ENCODE measurements at regions of chr6 and their contacts with region 1.

Region 1: DNA sequence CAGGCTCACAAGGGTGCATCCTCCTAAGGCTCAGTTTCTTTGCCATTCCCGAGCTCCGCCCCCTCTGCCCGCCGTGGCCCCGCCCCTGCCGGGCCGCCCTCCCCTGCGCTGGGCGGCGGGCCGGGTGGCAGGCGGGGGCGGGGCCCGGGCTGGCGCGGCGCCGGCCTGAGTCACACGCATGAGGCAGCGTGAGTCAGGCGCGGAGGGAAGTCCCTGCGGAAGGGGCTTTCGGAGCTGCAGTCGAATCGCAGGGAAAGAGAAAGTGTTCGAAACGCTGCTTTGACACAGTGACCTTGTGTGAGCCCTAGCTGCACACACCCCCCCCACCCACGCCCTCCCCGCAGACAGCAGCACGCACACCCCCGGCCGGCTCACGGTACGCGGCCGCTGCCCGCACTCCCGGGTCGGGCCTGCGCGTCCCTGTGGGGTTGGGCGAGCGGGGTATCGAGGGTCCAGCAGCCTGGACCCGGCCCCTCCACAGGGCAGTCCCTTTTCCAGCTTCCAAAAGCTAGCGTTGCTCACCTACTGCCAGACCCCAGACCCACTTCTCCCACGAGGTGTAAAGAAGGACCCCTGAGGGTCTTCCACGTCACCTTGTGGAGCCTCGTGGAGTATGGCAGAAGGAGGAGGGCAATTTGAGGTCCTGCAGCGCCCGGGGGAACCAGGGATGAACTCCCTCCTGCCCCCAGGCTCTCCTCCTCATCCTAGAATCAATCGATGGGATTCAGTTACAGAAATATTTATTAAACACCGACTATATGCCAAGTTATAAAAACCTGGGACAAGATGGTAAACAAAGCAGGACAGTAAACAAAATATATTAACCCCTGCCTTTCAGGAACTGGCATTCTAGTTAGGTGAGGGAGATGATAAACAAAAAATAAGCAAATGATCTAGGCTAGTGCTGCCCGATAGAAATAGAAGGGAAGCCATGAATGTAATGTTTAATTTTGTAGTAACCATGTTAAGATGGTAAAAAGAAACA is 12.4 kb upstream of the HMGA1 start:
- DNase-seq: peak; percentile 79 to 96
- H3K4me3 ChIP-seq: peak overlapping the region; percentile 73 to 77
- H3K27ac ChIP-seq: peak overlapping the region; percentile 91 to 92
- H3K4me1 ChIP-seq: peaks cover 0 to 10% of the 10 kb centered on the region in 2 donors
- H3K27me3 ChIP-seq: no peaks in the 10 kb centered on the region
- CTCF ChIP-seq: no peak

Region 2: DNA sequence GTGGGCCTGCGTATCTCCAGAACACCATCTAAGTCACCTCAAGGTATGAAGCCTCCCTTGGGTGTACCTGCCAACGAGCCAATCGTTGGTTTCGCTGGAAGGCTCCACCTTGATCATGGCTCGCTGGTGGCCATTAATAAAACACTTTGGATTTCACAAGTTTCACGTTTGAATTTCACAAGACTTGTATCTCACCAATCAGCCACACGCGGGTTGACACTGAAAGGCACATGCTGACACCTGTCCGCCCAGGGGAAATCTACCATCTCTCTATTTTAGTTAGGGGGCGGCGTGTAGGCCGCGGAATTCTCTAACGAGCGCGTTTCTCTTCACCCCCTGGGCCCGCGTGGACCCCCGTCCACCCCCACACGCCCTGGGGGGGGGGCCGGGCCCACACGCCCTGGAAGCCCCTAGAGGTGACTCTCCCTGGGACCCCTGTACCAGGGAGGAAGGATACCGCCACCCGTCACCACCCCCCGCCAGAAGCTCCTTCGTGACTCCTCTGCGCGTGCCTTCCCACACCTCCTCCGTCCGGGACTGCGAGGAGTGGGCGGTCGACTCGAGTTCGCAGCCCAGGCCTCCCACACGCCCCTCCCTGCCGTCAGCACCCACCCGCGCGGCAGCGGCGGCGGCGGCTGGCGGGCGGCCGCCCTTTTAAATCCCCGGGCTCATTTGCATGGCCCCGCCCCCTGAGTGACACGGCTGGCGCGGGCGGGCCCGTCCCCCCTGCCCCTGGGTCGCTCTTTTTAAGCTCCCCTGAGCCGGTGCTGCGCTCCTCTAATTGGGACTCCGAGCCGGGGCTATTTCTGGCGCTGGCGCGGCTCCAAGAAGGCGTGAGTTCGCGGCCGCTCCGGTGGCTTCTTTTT is 12.1 kb after region 1 on chr6 and contains the start of gene HMGA1:
- intact Hi-C with region 1: loop called (anchors 1 kb)
- DNase-seq: peak; percentile 72 to 92
- H3K4me3 ChIP-seq: peak within 1 kb of the TSS; percentile 67 to 71
- H3K27ac ChIP-seq: peak within 1 kb of the TSS; percentile 80 to 90
- H3K4me1 ChIP-seq: peaks cover 10 to 12% of the 10 kb centered on the region in 2 donors
- H3K27me3 ChIP-seq: no peaks in the 10 kb centered on the region
- CTCF ChIP-seq: no peak
- total RNA-seq, gene HMGA1: 21.4 TPM

Measured in ascending aorta (tissue), 2 donors.